ENCODE measurements at regions of chr6 and their contacts with region 1.

Region 1: DNA sequence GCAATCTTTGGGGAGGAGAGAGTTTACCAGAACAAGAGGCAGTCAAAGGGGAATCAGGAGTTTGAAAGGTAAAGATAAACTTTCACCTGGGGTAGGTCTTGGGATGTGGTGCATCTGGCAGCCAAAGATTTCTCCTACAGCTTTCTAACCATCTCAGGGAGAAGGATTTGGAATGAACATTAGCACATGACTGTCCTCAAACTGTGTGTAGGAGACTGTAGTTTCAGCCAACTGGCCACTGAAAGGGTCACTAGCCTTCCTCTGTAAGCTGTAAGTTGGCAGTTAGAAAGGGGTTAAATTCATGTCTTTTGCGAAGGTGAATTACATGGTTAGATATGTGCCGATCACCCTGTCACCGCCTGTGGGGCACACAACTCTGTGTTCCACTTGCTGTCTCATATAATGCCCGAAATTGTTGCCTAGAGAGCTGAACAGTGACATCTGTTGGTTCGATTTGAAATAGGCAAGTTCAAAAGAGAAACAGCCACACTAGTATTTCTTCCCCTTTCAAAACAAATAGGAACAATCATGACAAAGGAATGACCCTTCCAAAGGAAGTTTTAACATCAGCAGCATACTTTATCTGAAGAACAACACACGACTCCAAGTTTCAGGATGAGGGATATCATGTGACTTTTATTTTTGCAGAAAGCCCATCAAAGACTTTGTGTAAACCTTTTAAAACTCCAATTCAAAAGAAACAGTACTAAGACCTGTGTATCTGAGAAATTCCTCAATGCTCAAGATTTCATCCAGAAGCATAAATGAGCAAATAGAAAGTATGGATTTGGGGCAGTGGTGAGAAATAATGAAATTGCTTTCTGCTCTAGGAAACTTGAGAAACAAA is 1.1 kb upstream of the OPN5 start:
- DNase-seq: peak in 2 of 4 donors; percentile 37 to 64
- ATAC-seq: peak; percentile 97
- H3K4me3 ChIP-seq: no peak overlapping the region
- H3K27ac ChIP-seq: no peak overlapping the region
- H3K4me1 ChIP-seq: peaks cover 0 to 6% of the 10 kb centered on the region in 2 donors
- H3K27me3 ChIP-seq: no peaks in the 10 kb centered on the region
- CTCF ChIP-seq: peak; percentile 36 to 56

Region 2: GRCh38 chr6:47413752-47414422 is 366.8 kb before region 1 on chr6:
- intact Hi-C with region 1: loop called in 1 of 2 experiments (anchors 5 kb)
- DNase-seq: peak in 2 of 4 donors; percentile 71 to 84
- ATAC-seq: peak; percentile 97
- H3K4me3 ChIP-seq: peak overlapping the region; percentile 29 to 32
- H3K27ac ChIP-seq: peak overlapping the region; percentile 76 to 83
- H3K4me1 ChIP-seq: peaks cover 0 to 3% of the 10 kb centered on the region in 2 donors
- H3K27me3 ChIP-seq: no peaks in the 10 kb centered on the region
- CTCF ChIP-seq: peak; percentile 86 to 88

Region 3: DNA sequence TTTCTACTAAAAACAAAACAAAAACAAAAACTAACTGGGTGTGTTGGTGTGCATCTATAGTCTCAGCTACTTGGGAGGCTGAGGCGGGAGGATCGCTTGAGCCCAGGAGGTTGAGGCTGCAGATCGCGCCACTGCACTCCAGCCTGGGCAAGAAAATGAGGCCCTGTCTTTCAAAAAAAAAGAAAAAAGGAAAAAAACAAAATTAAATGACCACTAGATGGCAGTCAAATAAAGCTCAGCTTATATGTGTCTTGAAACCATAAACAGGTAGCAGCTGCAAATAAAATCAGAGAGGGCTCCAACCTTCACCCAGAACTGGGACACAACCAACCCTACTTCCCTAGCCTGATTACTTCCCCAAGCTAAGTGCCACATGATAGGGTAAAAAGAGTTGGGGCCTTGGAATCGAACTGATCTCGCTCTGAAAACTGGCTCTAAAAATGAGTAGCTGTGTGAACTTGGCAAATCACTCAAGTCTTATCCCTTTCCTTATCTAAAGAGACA is 149.4 kb before region 1 on chr6:
- intact Hi-C with region 1: loop called in 1 of 2 experiments (anchors 5 kb)
- DNase-seq: peak in 2 of 4 donors; percentile 31 to 39
- ATAC-seq: peak; percentile 81
- H3K4me3 ChIP-seq: no peak overlapping the region
- H3K27ac ChIP-seq: no peak overlapping the region
- H3K4me1 ChIP-seq: peaks cover 5 to 6% of the 10 kb centered on the region in 2 donors
- H3K27me3 ChIP-seq: no peaks in the 10 kb centered on the region
- CTCF ChIP-seq: peak in 1 of 2 donors; percentile 41